CD8-positive, alpha-beta memory T cell (primary cell): ENCODE measurements at regions of chrX and their contacts with region 1.

Region 1: DNA sequence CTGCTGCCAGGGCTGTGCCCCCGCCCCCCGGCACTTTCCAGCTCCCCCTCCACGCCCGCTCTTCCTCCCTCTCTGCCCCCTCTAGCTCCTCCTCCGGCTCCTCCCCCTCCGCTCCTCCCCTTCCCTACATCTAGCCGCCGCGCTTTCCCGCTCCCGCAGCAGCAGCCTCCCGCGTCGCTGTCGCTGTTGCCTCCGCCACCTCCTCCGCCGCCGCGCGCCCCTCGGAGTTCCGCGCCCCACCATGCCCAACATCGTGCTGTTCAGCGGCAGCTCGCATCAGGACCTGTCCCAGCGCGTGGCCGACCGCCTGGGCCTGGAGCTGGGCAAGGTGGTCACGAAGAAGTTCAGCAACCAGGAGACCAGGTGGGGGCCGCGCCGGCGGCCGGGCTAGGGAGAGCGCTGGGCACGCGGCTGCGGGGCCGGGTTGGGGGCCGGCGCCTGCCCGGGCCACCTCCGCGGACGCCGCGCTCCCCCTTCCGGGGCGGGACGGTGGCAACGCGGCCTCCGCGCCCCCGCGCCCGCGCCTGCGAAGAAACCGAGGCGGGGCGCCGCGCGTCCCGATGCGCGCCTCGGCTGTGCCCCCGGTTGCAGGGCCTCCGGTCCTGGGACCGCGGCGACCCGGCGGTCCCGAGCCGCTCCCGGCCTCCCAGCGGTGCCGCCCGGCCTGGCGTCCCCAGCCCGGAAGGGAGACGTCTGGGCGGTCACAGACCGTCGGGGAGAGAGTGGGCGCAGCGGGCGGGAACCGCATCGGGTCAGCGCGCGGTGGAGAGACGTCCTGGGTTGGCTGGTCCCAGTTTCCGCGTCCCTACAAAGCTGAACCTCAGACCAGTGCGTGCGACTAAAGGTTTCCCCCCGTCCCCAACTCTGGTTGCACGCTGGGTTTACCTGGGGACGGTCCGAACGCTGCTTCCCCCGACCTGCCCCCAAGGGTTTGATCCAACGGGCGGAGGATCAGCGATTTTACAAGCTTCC is at the start of gene PRPS2:
- DNase-seq: peak; percentile 59 to 80 (median 63)
- H3K4me3 ChIP-seq: peak within 1 kb of the TSS; percentile 77
- H3K4me3 Mint-ChIP-seq: peak within 1 kb of the TSS; percentile 85 to 95 (median 89)
- H3K27ac ChIP-seq: no peak within 1 kb of the TSS
- H3K27ac Mint-ChIP-seq: peak within 1 kb of the TSS; percentile 65 to 89 (median 76)
- H3K4me1 ChIP-seq: peaks cover 6% of the 10 kb centered on the region
- H3K4me1 Mint-ChIP-seq: peaks cover 12 to 40% (median 27%) of the 10 kb centered on the region in 3 donors
- H3K27me3 ChIP-seq: no peaks in the 10 kb centered on the region
- H3K27me3 Mint-ChIP-seq: peaks cover 0 to 5% of the 10 kb centered on the region in 2 donors
- total RNA-seq, gene PRPS2: 80.4 to 81.8 TPM

Region 2: GRCh38 chrX:12771445-12772069 is 20.0 kb before region 1 on chrX:
- CTCF ChIA-PET with region 1: interaction called, 10 read pairs
- POLR2A ChIA-PET with region 1: no interaction called
- DNase-seq: peak; percentile 45 to 72 (median 56)
- H3K4me3 ChIP-seq: no peak overlapping the region
- H3K4me3 Mint-ChIP-seq: peak overlapping the region in 4 of 7 donors; percentile 3 to 39 (median 30)
- H3K27ac ChIP-seq: no peak overlapping the region
- H3K27ac Mint-ChIP-seq: no peak overlapping the region
- H3K4me1 ChIP-seq: no peaks in the 10 kb centered on the region
- H3K4me1 Mint-ChIP-seq: peaks cover 6 to 10% (median 7%) of the 10 kb centered on the region in 3 donors
- H3K27me3 ChIP-seq: no peaks in the 10 kb centered on the region
- H3K27me3 Mint-ChIP-seq: peaks cover 11 to 31% of the 10 kb centered on the region in 2 donors